ENCODE measurements at regions of chr1 and their contacts with region 1.

Region 1: DNA sequence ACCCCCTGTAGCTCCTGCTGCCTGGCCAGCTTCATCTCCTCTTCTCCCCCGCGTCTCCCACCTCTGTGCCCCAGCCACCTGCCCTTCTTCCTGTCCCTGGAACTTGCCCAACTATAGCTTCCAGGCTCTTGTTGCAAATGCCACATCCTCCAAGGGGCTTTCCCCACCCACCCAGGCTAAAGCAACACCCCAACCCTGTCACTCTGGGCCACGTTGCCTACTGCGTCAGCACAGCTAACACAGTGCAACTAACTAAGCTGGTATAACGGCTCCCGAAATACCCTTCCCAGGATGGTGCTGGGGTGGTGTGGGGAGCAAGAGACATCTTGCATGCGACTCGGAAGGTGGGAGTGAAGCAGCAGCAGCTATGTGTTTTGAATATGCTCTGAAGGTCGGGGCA is 19.7 kb downstream of the CAMK2N1 start:
- DNase-seq: no peak

Region 2: DNA sequence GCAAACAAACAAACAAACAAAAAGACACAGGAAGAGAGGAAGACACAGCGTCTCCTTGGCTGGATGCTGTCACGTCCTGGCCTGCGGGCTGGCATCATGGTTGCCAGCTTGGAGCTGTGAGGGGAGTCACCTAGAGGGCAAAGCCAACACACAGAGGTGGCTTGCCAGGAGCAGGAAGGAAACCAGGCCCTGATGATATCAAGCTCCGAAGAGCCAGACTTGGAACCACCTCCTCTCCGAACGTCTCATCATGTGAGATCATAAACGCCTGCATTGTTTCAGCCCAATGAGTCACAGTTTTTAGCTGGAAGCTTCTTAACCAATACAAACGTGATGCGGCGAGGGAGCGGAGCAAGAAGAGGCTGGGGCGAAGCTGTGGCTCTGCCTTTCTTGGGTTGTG is 355.6 kb before region 1 on chr1:
- CTCF ChIA-PET with region 1: no interaction called
- POLR2A ChIA-PET with region 1: no interaction called
- DNase-seq: no peak

Region 3: GRCh38 chr1:20485527-20486456 is 19.5 kb after region 1 on chr1 and contains the start of gene CAMK2N1:
- CTCF ChIA-PET with region 1: interaction called, 3 read pairs
- POLR2A ChIA-PET with region 1: interaction called, 12 read pairs
- DNase-seq: peak; percentile 76

Measured in HEK293T (cell line).